ENCODE measurements at regions of chr2 and their contacts with region 1.

Region 1: GRCh38 chr2:203909261-203909967 is 27.1 kb upstream of the ICOS start:
- DNase-seq: peak in 6 of 9 donors; percentile 42 to 61 (median 53)
- ATAC-seq: peak; percentile 82
- H3K4me3 ChIP-seq: no peak overlapping the region
- H3K4me3 Mint-ChIP-seq: peak overlapping the region in 8 of 10 donors; percentile 26 to 81 (median 64)
- H3K27ac ChIP-seq: no peak overlapping the region
- H3K27ac Mint-ChIP-seq: peak overlapping the region in 6 of 9 donors; percentile 8 to 71 (median 42)
- H3K4me1 ChIP-seq: peaks cover 0 to 7% of the 10 kb centered on the region in 2 donors
- H3K4me1 Mint-ChIP-seq: peaks cover 4 to 25% (median 8%) of the 10 kb centered on the region in 7 donors
- H3K27me3 ChIP-seq: no peaks in the 10 kb centered on the region
- H3K27me3 Mint-ChIP-seq: peaks cover 0 to 10% (median 0%) of the 10 kb centered on the region in 5 donors

Region 2: GRCh38 chr2:202577250-202578183 is 1331.9 kb before region 1 on chr2:
- CTCF ChIA-PET with region 1: no interaction called
- POLR2A ChIA-PET with region 1: no interaction called
- intact Hi-C with region 1: loop called (anchors 5 to 10 kb)
- DNase-seq: no peak
- ATAC-seq: no peak
- H3K4me3 ChIP-seq: no peak overlapping the region
- H3K4me3 Mint-ChIP-seq: no peak overlapping the region
- H3K27ac ChIP-seq: no peak overlapping the region
- H3K27ac Mint-ChIP-seq: peak overlapping the region in 2 of 9 donors; percentile 38 to 53
- H3K4me1 ChIP-seq: no peaks in the 10 kb centered on the region
- H3K4me1 Mint-ChIP-seq: peaks cover 0 to 2% (median 0%) of the 10 kb centered on the region in 7 donors
- H3K27me3 ChIP-seq: no peaks in the 10 kb centered on the region
- H3K27me3 Mint-ChIP-seq: no peaks in the 10 kb centered on the region

Region 3: DNA sequence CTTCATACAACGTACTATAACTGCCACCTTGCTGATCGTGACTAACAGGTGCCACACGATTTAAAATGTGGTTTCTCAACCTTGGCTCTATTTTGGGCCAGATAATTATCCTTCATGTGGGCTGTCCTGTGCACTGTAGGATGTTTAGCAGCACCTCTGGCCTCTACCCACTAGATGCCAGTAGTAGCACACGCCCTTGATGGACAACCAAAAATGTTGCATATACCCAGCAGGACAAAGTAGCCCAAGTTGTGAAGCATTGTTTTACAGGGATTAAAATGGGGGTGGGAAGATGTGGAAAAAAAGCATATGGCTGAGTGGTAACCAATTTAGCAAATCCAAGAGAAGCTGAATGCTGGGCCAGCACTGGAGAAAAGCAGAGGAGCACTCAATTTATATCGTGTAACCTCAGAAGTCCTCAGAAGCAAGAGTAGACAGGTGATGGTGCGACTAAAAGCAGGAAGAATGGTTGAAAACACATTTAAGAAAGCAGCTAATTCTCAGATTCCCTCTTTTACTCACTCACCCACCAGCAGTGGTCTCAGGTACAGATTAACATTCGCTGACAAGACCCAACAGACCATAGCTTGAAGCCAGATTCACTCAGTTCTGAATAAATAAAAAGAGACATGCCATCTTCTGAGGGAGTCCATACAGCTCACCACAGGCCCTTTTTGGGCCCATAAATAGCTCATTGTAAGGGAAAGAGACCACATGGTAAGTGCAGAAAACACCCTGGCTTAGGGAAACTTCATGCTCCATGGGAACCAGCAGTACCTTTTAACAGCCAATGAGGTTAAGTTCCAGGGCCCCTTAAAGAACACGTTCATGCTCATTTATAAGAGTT is 424.9 kb before region 1 on chr2:
- CTCF ChIA-PET with region 1: interaction called, 18 read pairs
- POLR2A ChIA-PET with region 1: interaction called, 3 read pairs
- intact Hi-C with region 1: loop called (anchors 1 kb)
- DNase-seq: peak in 8 of 9 donors; percentile 20 to 69 (median 60)
- ATAC-seq: peak; percentile 92
- H3K4me3 ChIP-seq: no peak overlapping the region
- H3K4me3 Mint-ChIP-seq: peak overlapping the region in 5 of 10 donors; percentile 2 to 38 (median 14)
- H3K27ac ChIP-seq: no peak overlapping the region
- H3K27ac Mint-ChIP-seq: peak overlapping the region in 7 of 9 donors; percentile 3 to 88 (median 24)
- H3K4me1 ChIP-seq: peaks cover 0 to 7% of the 10 kb centered on the region in 2 donors
- H3K4me1 Mint-ChIP-seq: peaks cover 2 to 9% (median 7%) of the 10 kb centered on the region in 7 donors
- H3K27me3 ChIP-seq: no peaks in the 10 kb centered on the region
- H3K27me3 Mint-ChIP-seq: no peaks in the 10 kb centered on the region

Region 4: DNA sequence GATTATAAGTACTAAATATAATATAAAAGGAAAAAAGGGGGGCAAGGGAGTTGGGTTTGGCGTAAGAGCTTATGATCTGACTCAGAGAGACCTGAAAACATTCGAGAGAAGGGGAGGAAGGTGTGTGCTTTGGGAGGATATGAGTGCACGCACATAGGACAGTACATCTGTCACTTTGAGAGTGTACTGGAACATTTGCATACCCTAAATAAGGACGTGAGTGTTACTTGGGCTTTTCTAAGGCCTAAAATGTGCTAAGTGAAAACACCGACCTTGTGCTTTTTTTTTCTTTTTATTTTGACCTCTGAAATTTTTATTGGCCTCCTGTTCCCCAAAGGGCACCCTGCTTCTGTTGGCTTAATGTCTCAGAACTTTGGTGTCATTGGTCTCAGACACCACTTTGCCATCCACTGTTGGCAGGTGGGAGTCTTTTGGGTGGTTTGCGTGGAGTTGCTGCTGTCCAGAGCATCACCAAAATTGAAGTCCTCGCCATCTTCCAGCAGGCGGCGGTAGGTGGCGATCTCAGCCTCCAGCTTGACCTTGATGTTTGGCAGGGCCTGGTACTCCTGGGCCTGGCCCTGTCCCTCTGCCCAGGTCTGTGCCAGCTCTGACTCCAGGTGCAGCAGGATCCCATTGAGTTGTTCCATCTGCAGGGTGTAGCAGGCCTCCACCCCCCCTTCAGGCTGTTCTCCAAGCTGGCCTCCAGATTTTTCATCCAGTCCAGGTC is 145.3 kb before region 1 on chr2:
- CTCF ChIA-PET with region 1: no interaction called
- POLR2A ChIA-PET with region 1: no interaction called
- intact Hi-C with region 1: no loop called
- DNase-seq: peak in 4 of 9 donors; percentile 14 to 54 (median 40)
- ATAC-seq: peak; percentile 82
- H3K4me3 ChIP-seq: no peak overlapping the region
- H3K4me3 Mint-ChIP-seq: peak overlapping the region; percentile 24 to 74 (median 57)
- H3K27ac ChIP-seq: peak overlapping the region; percentile 30
- H3K27ac Mint-ChIP-seq: peak overlapping the region; percentile 84 to 94 (median 90)
- H3K4me1 ChIP-seq: peaks cover 39 to 60% of the 10 kb centered on the region in 2 donors
- H3K4me1 Mint-ChIP-seq: peaks cover 37 to 90% (median 82%) of the 10 kb centered on the region in 7 donors
- H3K27me3 ChIP-seq: no peaks in the 10 kb centered on the region
- H3K27me3 Mint-ChIP-seq: no peaks in the 10 kb centered on the region

Region 5: DNA sequence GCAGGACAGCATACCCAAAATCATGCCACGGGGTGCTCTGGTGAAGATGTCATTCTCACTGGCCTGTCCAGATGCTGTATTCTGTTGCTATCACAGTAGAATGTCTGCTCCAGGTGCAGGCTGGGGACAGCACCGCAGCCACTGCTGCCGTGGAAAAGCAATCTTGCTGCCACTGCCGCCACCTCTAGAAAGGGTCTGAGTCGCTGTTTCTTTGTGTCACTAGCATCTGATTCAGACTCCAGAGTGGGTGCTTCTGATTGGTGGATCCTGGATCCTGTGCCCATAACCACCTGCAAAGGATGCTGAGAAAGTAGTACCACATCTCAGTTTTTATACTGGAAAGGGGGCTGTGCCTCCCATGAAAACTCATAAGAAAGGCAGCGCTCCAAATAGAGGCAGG is 87.2 kb before region 1 on chr2:
- CTCF ChIA-PET with region 1: interaction called, 58 read pairs
- POLR2A ChIA-PET with region 1: interaction called, 3 read pairs
- intact Hi-C with region 1: loop called in 1 of 2 experiments (anchors 2 kb)
- DNase-seq: no peak
- ATAC-seq: no peak
- H3K4me3 ChIP-seq: no peak overlapping the region
- H3K4me3 Mint-ChIP-seq: no peak overlapping the region
- H3K27ac ChIP-seq: no peak overlapping the region
- H3K27ac Mint-ChIP-seq: peak overlapping the region in 1 of 9 donors; percentile 26
- H3K4me1 ChIP-seq: no peaks in the 10 kb centered on the region
- H3K4me1 Mint-ChIP-seq: peaks cover 0 to 19% (median 4%) of the 10 kb centered on the region in 7 donors
- H3K27me3 ChIP-seq: no peaks in the 10 kb centered on the region
- H3K27me3 Mint-ChIP-seq: no peaks in the 10 kb centered on the region

Region 6: DNA sequence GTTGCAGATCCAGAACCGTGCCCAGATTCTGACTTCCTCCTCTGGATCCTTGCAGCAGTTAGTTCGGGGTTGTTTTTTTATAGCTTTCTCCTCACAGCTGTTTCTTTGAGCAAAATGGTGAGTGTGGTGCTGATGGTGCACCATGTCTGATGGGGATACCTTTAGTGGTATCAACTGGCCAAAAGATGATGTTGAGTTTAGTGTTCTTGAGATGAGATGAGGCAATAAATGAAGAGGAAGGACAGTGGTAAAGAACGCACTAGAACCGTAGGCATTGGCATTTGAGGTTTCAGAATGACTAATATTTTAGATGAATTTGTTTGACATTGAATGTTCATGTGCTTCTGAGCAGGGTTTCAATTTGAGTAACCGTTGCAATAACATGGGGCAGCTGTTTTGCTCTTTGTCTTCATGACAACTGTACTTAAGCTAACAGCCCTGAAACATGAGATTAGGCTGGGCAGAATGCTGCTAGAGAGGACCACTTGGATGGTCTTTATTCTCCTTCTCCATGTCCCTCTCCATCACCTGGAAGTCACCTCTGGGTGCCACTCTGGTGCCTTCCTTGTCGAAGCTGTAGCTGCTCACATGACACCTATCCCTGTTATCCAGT is 37.9 kb before region 1 on chr2:
- CTCF ChIA-PET with region 1: interaction called, 14 read pairs
- POLR2A ChIA-PET with region 1: interaction called, 6 read pairs
- intact Hi-C with region 1: loop called (anchors 1 kb)
- DNase-seq: peak in 1 of 9 donors; percentile 45
- ATAC-seq: peak; percentile 30
- H3K4me3 ChIP-seq: no peak overlapping the region
- H3K4me3 Mint-ChIP-seq: peak overlapping the region; percentile 55 to 96 (median 77)
- H3K27ac ChIP-seq: peak overlapping the region; percentile 79
- H3K27ac Mint-ChIP-seq: peak overlapping the region; percentile 48 to 99 (median 92)
- H3K4me1 ChIP-seq: peaks cover 56 to 64% of the 10 kb centered on the region in 2 donors
- H3K4me1 Mint-ChIP-seq: peaks cover 44 to 93% (median 80%) of the 10 kb centered on the region in 7 donors
- H3K27me3 ChIP-seq: no peaks in the 10 kb centered on the region
- H3K27me3 Mint-ChIP-seq: no peaks in the 10 kb centered on the region